Psoas muscle (tissue), 8 donors: ENCODE measurements at regions of chr3 and their contacts with region 1.

Region 1: DNA sequence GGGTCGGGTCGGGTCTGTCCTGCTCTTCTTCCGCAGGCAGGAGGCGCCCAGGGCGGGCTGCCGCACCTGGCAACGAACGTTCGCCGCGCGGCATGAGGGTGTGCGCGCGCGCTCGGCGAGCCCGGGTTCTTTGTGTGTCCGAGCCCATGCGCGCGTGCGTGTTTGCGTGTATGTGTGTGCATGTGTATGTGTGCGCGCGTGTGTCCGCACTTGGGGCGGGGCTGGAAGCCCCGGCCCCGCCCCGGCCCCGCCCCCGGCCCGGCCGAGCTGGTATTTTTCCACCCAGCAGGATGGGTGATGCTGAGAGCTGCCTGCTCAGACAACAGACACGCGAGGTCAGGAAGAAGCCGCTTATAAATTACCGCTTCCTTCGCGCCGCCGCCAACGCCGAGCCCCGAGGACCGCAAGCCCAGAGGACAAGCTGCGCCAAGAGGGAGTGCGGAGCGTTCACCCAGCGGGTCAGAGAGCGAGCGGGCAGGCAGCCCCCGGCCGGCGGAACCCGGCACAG is at the start of gene SLC6A6:
- DNase-seq: peak; percentile 96 to 97
- ATAC-seq: peak; percentile 78 to 81 (median 80)
- H3K4me3 ChIP-seq: peak within 1 kb of the TSS; percentile 91
- H3K27ac ChIP-seq: peak within 1 kb of the TSS; percentile 97
- H3K4me1 ChIP-seq: peaks cover 23% of the 10 kb centered on the region
- H3K27me3 ChIP-seq: no peaks in the 10 kb centered on the region
- CTCF ChIP-seq: peak; percentile 43
- total RNA-seq, gene SLC6A6: 10.3 to 104 (median 34.7) TPM

Region 2: GRCh38 chr3:14203521-14204079 is 198.8 kb before region 1 on chr3:
- intact Hi-C with region 1: loop called in 1 of 2 experiments (anchors 10 kb)
- DNase-seq: peak; percentile 58 to 71
- ATAC-seq: peak; percentile 78 to 85 (median 82)
- H3K4me3 ChIP-seq: no peak overlapping the region
- H3K27ac ChIP-seq: peak overlapping the region; percentile 84
- H3K4me1 ChIP-seq: peaks cover 27% of the 10 kb centered on the region
- H3K27me3 ChIP-seq: no peaks in the 10 kb centered on the region
- CTCF ChIP-seq: peak; percentile 87

Region 3: GRCh38 chr3:14452679-14453367 is 50.5 kb after region 1 on chr3:
- intact Hi-C with region 1: loop called (anchors 5 kb)
- DNase-seq: peak; percentile 90 to 95
- ATAC-seq: peak; percentile 78 to 81 (median 80)
- H3K4me3 ChIP-seq: no peak overlapping the region
- H3K27ac ChIP-seq: peak overlapping the region; percentile 91
- H3K4me1 ChIP-seq: peaks cover 45% of the 10 kb centered on the region
- H3K27me3 ChIP-seq: no peaks in the 10 kb centered on the region
- CTCF ChIP-seq: peak; percentile 20

Region 4: DNA sequence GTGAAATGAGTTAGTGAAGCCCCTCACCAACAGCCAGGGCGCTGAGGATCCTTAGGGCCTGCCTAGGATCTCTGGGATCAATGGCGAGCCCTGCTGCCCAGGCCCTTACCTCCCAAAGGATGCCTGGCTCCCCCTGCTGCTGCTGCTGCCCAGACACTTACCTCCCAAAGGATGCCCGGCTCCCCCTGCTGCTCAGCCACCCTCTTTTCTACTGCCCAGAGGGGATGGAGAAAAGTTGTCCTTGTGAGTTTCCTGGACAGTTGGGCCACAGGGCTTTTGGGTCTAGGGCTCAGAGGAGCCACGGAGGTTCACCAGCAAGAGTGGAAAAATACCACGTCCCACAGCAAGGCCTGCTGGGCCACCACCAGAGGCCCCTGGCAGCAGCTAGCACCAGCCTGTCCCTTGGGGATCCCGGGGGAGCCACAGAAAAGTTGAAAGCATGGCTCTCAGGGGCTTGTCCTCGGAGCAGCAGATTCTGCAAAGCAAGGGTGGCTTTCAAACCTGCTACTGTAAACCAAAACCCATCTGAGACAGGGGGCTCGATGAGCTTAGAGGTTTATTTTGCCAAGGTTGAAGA is 59.5 kb after region 1 on chr3:
- intact Hi-C with region 1: loop called (anchors 2 to 5 kb)
- DNase-seq: no peak
- ATAC-seq: peak; percentile 26 to 58 (median 36)
- H3K4me3 ChIP-seq: no peak overlapping the region
- H3K27ac ChIP-seq: no peak overlapping the region
- H3K4me1 ChIP-seq: peaks cover 23% of the 10 kb centered on the region
- H3K27me3 ChIP-seq: no peaks in the 10 kb centered on the region
- CTCF ChIP-seq: peak; percentile 39